ENCODE measurements at regions of chr6 and their contacts with region 1.

Region 1: GRCh38 chr6:77457720-77458349 is 5.5 kb downstream of the HTR1B start:
- DNase-seq: peak; percentile 45
- ATAC-seq: peak; percentile 91
- H3K4me3 ChIP-seq: no peak overlapping the region
- H3K27ac ChIP-seq: no peak overlapping the region
- H3K4me1 ChIP-seq: no peaks in the 10 kb centered on the region
- H3K27me3 ChIP-seq: peaks cover 0 to 7% of the 10 kb centered on the region in 2 experiments; a peak in 1 of 5 replicates
- CTCF ChIP-seq: peak; percentile 71
- EP300 ChIP-seq: no peak
- POLR2A ChIP-seq: no peak
- RAD21 ChIP-seq: 0 out of 2 replicates have a peak, but pooled peaks have one; percentile 30

Region 2: DNA sequence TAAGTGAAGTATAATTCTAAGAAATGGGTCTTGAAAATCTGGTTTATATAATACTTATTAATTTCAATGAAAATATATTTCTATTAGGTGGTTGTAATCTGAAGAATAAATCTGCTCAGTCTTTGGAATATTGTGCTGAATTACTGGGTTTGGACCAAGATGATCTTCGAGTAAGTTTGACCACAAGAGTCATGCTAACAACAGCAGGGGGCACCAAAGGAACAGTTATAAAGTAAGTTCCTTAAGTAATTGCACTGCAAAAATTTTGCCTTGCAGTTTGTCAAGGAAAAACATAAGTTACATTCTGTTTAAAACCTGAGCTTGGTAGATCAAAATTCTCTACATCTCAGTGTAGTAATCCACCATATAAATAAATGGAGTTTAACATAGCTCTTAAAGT is 1602.8 kb before region 1 on chr6:
- CTCF ChIA-PET with region 1: no interaction called
- POLR2A ChIA-PET with region 1: no interaction called
- in situ Hi-C with region 1: no loop called
- intact Hi-C with region 1: loop called (anchors 2 kb)
- DNase-seq: peak; percentile 59
- ATAC-seq: peak; percentile 46; the same call in 1 of the 3 replicates
- H3K4me3 ChIP-seq: no peak overlapping the region
- H3K27ac ChIP-seq: no peak overlapping the region
- H3K4me1 ChIP-seq: peaks cover 23% of the 10 kb centered on the region
- H3K27me3 ChIP-seq: no peaks in the 10 kb centered on the region
- CTCF ChIP-seq: peak; percentile 48
- EP300 ChIP-seq: no peak
- POLR2A ChIP-seq: no peak
- RAD21 ChIP-seq: no peak

Region 3: GRCh38 chr6:75893058-75893775 is 1564.6 kb before region 1 on chr6:
- CTCF ChIA-PET with region 1: no interaction called
- POLR2A ChIA-PET with region 1: no interaction called
- in situ Hi-C with region 1: no loop called
- intact Hi-C with region 1: loop called (anchors 10 kb)
- DNase-seq: peak; percentile 61
- ATAC-seq: peak; percentile 81
- H3K4me3 ChIP-seq: no peak overlapping the region
- H3K27ac ChIP-seq: no peak overlapping the region
- H3K4me1 ChIP-seq: no peaks in the 10 kb centered on the region
- H3K27me3 ChIP-seq: no peaks in the 10 kb centered on the region
- CTCF ChIP-seq: peak; percentile 75
- EP300 ChIP-seq: no peak
- POLR2A ChIP-seq: no peak
- RAD21 ChIP-seq: peak; percentile 57; the same call in 1 of the 2 replicates

Region 4: GRCh38 chr6:75934643-75935472 is 1523.0 kb before region 1 on chr6:
- CTCF ChIA-PET with region 1: interaction called, 7 read pairs
- POLR2A ChIA-PET with region 1: no interaction called
- in situ Hi-C with region 1: loop called (anchors 5 kb)
- intact Hi-C with region 1: loop called (anchors 1 kb)
- DNase-seq: peak; percentile 70
- ATAC-seq: peak; percentile 81
- H3K4me3 ChIP-seq: peak overlapping the region in 1 of 3 experiments; percentile 53; a peak in 1 of 6 replicates
- H3K27ac ChIP-seq: no peak overlapping the region
- H3K4me1 ChIP-seq: peaks cover 14% of the 10 kb centered on the region; the same call in 1 of the 2 replicates
- H3K27me3 ChIP-seq: peaks cover 0 to 3% of the 10 kb centered on the region in 2 experiments; a peak in 1 of 5 replicates
- CTCF ChIP-seq: peak; percentile 85
- EP300 ChIP-seq: no peak
- POLR2A ChIP-seq: no peak
- RAD21 ChIP-seq: peak; percentile 62

Region 5: GRCh38 chr6:77173472-77174074 is 284.3 kb before region 1 on chr6:
- CTCF ChIA-PET with region 1: no interaction called
- POLR2A ChIA-PET with region 1: no interaction called
- in situ Hi-C with region 1: no loop called
- intact Hi-C with region 1: loop called (anchors 5 kb)
- DNase-seq: peak; percentile 1
- ATAC-seq: no peak
- H3K4me3 ChIP-seq: no peak overlapping the region
- H3K27ac ChIP-seq: no peak overlapping the region
- H3K4me1 ChIP-seq: no peaks in the 10 kb centered on the region
- H3K27me3 ChIP-seq: no peaks in the 10 kb centered on the region
- CTCF ChIP-seq: no peak
- EP300 ChIP-seq: no peak
- POLR2A ChIP-seq: no peak
- RAD21 ChIP-seq: no peak